Activated CD4-positive, alpha-beta T cell treated with anti-CD3 and anti-CD28 coated beads for 36 hours (primary cell): ENCODE measurements at regions of chr7 and their contacts with region 1.

Region 1: GRCh38 chr7:140479062-140479738 is at the start of gene MKRN1:
- DNase-seq: peak; percentile 97
- ATAC-seq: peak; percentile 95
- H3K4me3 Mint-ChIP-seq: peak within 1 kb of the TSS; percentile 99
- H3K27ac Mint-ChIP-seq: peak within 1 kb of the TSS; percentile 95
- H3K4me1 Mint-ChIP-seq: peaks cover 24% of the 10 kb centered on the region
- H3K27me3 Mint-ChIP-seq: no peaks in the 10 kb centered on the region
- total RNA-seq, gene MKRN1: 73.6 to 77.9 TPM

Region 2: DNA sequence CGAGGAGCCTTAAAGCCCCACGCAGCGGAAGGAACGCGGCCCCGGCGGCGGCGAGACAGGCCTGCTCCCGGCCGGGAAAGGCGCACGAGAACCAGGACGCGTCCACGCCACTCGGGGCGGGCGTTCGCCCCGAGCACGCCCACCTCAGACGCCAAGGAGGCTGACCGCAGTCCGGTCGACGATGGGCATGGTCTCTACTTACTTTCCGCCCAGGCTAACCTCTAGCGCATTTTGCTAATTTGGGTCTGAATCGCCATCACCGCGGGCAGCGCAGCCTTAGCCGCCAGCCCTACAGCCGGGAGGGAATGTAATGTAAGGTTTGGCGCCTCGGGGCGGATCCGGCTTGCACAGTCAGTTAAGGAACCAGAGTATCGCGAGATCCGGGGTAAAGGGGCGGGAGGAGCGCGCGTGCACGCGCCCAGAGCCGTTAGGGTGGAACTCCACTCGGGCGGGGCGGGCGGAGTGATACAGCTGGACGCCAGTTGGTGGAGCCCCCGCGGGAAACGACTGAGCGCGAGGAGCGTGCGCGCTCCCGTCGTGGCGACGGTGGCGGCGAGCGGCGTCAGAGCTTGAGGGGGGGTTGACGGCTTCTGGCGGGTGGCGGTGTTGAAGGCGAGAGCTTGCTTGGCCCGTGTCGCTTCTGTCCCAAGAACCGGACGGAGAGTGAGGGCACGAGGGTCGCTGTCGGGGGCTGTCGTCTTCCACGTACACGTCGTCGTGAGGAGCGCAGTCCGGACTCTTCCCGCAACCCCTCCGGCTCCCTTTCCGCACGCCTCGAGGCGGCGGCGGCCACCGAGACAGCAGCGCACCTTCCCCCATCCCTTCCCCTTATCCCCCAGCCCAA is 1119.6 kb before region 1 on chr7 and contains the start of gene LUC7L2:
- CTCF ChIA-PET with region 1: no interaction called
- POLR2A ChIA-PET with region 1: no interaction called
- intact Hi-C with region 1: loop called in 1 of 2 experiments (anchors 2 kb)
- DNase-seq: peak; percentile 100
- ATAC-seq: peak; percentile 75
- H3K4me3 Mint-ChIP-seq: peak within 1 kb of the TSS; percentile 99
- H3K27ac Mint-ChIP-seq: peak within 1 kb of the TSS; percentile 98
- H3K4me1 Mint-ChIP-seq: peaks cover 25% of the 10 kb centered on the region
- H3K27me3 Mint-ChIP-seq: no peaks in the 10 kb centered on the region
- total RNA-seq, gene LUC7L2: 124 to 126 TPM

Region 3: GRCh38 chr7:140326116-140326928 is 152.9 kb before region 1 on chr7:
- CTCF ChIA-PET with region 1: no interaction called
- POLR2A ChIA-PET with region 1: no interaction called
- intact Hi-C with region 1: no loop called
- DNase-seq: peak; percentile 72
- ATAC-seq: peak; percentile 88
- H3K4me3 Mint-ChIP-seq: no peak overlapping the region
- H3K27ac Mint-ChIP-seq: peak overlapping the region; percentile 44
- H3K4me1 Mint-ChIP-seq: no peaks in the 10 kb centered on the region
- H3K27me3 Mint-ChIP-seq: no peaks in the 10 kb centered on the region

Region 4: GRCh38 chr7:140375892-140376730 is 103.1 kb before region 1 on chr7:
- CTCF ChIA-PET with region 1: interaction called, 3 read pairs
- POLR2A ChIA-PET with region 1: no interaction called
- intact Hi-C with region 1: loop called (anchors 1 to 5 kb)
- DNase-seq: peak; percentile 45
- ATAC-seq: peak; percentile 90
- H3K4me3 Mint-ChIP-seq: peak overlapping the region; percentile 57
- H3K27ac Mint-ChIP-seq: peak overlapping the region; percentile 95
- H3K4me1 Mint-ChIP-seq: peaks cover 53% of the 10 kb centered on the region
- H3K27me3 Mint-ChIP-seq: no peaks in the 10 kb centered on the region

Region 5: DNA sequence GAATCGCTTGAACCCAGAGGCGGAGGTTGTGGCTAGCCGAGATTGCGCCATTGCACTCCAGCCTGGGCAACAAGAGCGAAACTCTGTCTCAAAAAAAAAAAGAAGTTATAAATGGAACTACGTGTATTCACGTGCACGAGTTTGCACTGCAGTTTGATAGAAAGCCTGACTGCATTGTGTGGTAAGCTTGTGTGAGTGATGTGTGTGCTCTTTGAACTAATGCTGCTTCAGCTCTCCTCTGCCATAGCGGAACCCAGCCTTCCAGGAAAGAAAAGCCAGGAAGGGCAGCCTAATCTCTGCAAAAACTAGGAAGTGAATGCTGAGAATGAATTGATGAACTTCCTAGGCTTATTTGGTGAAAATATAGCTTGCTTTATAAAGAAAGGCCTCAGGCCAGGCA is 15.7 kb after region 1 on chr7:
- CTCF ChIA-PET with region 1: interaction called, 43 read pairs
- POLR2A ChIA-PET with region 1: interaction called, 6 read pairs
- intact Hi-C with region 1: loop called (anchors 1 kb)
- DNase-seq: no peak
- ATAC-seq: no peak
- H3K4me3 Mint-ChIP-seq: no peak overlapping the region
- H3K27ac Mint-ChIP-seq: no peak overlapping the region
- H3K4me1 Mint-ChIP-seq: no peaks in the 10 kb centered on the region
- H3K27me3 Mint-ChIP-seq: no peaks in the 10 kb centered on the region

Region 6: GRCh38 chr7:140696680-140697446 is 217.7 kb after region 1 on chr7 and contains the start of gene NDUFB2:
- CTCF ChIA-PET with region 1: no interaction called
- POLR2A ChIA-PET with region 1: no interaction called
- intact Hi-C with region 1: loop called (anchors 1 to 2 kb)
- DNase-seq: peak; percentile 84
- ATAC-seq: peak; percentile 91
- H3K4me3 Mint-ChIP-seq: peak within 1 kb of the TSS; percentile 90
- H3K27ac Mint-ChIP-seq: peak within 1 kb of the TSS; percentile 97
- H3K4me1 Mint-ChIP-seq: peaks cover 30% of the 10 kb centered on the region
- H3K27me3 Mint-ChIP-seq: no peaks in the 10 kb centered on the region
- total RNA-seq, gene NDUFB2: 83.8 to 162 TPM

Region 7: GRCh38 chr7:141737834-141738591 is 1258.8 kb after region 1 on chr7 and contains the start of gene SSBP1:
- CTCF ChIA-PET with region 1: no interaction called
- POLR2A ChIA-PET with region 1: no interaction called
- intact Hi-C with region 1: loop called in 1 of 2 experiments (anchors 1 kb)
- DNase-seq: peak; percentile 95
- ATAC-seq: peak; percentile 89
- H3K4me3 Mint-ChIP-seq: peak within 1 kb of the TSS; percentile 96
- H3K27ac Mint-ChIP-seq: peak within 1 kb of the TSS; percentile 97
- H3K4me1 Mint-ChIP-seq: peaks cover 40% of the 10 kb centered on the region
- H3K27me3 Mint-ChIP-seq: no peaks in the 10 kb centered on the region
- total RNA-seq, gene SSBP1: 183 to 245 TPM